ENCODE measurements at regions of chr3 and their contacts with region 1.

Region 1: GRCh38 chr3:61561374-61562041 is at the start of gene PTPRG:
- DNase-seq: peak; percentile 93 to 96
- H3K4me3 ChIP-seq: peak within 1 kb of the TSS; percentile 80 to 97
- H3K27ac ChIP-seq: peak within 1 kb of the TSS; percentile 92 to 97
- H3K4me1 ChIP-seq: peaks cover 0 to 32% (median 18%) of the 10 kb centered on the region in 4 donors
- H3K27me3 ChIP-seq: no peaks in the 10 kb centered on the region
- CTCF ChIP-seq: no peak

Region 2: DNA sequence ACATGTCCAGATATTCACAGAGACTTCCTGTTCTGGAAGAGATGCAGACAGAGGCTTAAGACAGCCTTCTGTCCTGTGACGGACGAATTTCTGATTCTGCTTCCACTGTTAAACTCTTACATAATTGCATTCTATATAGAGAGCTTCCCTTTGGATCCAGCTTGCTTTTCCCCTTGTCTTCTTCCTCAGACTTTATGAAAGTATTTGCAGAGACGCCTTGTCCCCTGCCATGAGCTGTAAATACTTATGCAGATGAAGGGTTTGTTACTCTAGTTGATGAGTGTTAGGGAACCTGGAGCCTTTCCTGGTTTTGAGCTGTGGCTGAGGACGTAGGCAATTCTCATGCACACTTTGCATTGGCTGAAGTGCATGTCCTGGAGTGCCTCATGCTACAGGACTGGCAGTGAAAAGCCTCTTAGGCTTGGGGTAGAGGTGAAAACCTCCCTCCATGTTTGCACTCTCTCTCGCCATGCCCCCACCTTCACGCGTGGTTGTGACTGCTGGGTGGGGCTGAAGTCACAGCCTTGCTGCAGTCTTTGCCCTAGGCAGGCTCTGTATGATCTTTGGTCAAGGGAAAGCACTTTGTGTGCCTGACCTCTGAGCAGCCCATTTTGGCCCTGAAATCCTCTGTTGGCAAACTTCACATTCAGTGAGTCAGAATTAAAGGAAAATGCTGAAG is 286.4 kb after region 1 on chr3:
- intact Hi-C with region 1: loop called (anchors 10 kb)
- DNase-seq: peak; percentile 67 to 86
- H3K4me3 ChIP-seq: peak overlapping the region in 1 of 2 donors; percentile 8
- H3K27ac ChIP-seq: peak overlapping the region; percentile 64 to 72
- H3K4me1 ChIP-seq: peaks cover 0 to 86% (median 45%) of the 10 kb centered on the region in 4 donors
- H3K27me3 ChIP-seq: no peaks in the 10 kb centered on the region
- CTCF ChIP-seq: no peak

Region 3: GRCh38 chr3:61927332-61927731 is 365.8 kb after region 1 on chr3:
- intact Hi-C with region 1: loop called (anchors 10 kb)
- DNase-seq: peak; percentile 73 to 82
- H3K4me3 ChIP-seq: peak overlapping the region in 1 of 2 donors; percentile 16
- H3K27ac ChIP-seq: peak overlapping the region; percentile 57 to 59
- H3K4me1 ChIP-seq: peaks cover 0 to 80% (median 39%) of the 10 kb centered on the region in 4 donors
- H3K27me3 ChIP-seq: no peaks in the 10 kb centered on the region
- CTCF ChIP-seq: no peak

Region 4: GRCh38 chr3:61956236-61956635 is 394.7 kb after region 1 on chr3:
- intact Hi-C with region 1: loop called (anchors 10 kb)
- DNase-seq: no peak
- H3K4me3 ChIP-seq: no peak overlapping the region
- H3K27ac ChIP-seq: peak overlapping the region; percentile 57 to 70
- H3K4me1 ChIP-seq: peaks cover 0 to 68% (median 26%) of the 10 kb centered on the region in 4 donors
- H3K27me3 ChIP-seq: no peaks in the 10 kb centered on the region
- CTCF ChIP-seq: no peak

Region 5: GRCh38 chr3:62188681-62189383 is 627.3 kb after region 1 on chr3:
- intact Hi-C with region 1: loop called (anchors 1 kb)
- DNase-seq: peak; percentile 74 to 85
- H3K4me3 ChIP-seq: peak overlapping the region in 1 of 2 donors; percentile 15
- H3K27ac ChIP-seq: peak overlapping the region; percentile 51 to 60
- H3K4me1 ChIP-seq: peaks cover 0 to 37% (median 19%) of the 10 kb centered on the region in 4 donors
- H3K27me3 ChIP-seq: no peaks in the 10 kb centered on the region
- CTCF ChIP-seq: peak; percentile 77 to 88

Region 6: GRCh38 chr3:63538919-63539318 is 1977.4 kb after region 1 on chr3:
- intact Hi-C with region 1: no loop called
- DNase-seq: no peak
- H3K4me3 ChIP-seq: no peak overlapping the region
- H3K27ac ChIP-seq: no peak overlapping the region
- H3K4me1 ChIP-seq: no peaks in the 10 kb centered on the region
- H3K27me3 ChIP-seq: no peaks in the 10 kb centered on the region
- CTCF ChIP-seq: no peak

Measured in tibial artery (tissue), 4 donors.